Esophagus squamous epithelium (tissue), 5 donors: ENCODE measurements at regions of chr6 and their contacts with region 1.

Region 1: DNA sequence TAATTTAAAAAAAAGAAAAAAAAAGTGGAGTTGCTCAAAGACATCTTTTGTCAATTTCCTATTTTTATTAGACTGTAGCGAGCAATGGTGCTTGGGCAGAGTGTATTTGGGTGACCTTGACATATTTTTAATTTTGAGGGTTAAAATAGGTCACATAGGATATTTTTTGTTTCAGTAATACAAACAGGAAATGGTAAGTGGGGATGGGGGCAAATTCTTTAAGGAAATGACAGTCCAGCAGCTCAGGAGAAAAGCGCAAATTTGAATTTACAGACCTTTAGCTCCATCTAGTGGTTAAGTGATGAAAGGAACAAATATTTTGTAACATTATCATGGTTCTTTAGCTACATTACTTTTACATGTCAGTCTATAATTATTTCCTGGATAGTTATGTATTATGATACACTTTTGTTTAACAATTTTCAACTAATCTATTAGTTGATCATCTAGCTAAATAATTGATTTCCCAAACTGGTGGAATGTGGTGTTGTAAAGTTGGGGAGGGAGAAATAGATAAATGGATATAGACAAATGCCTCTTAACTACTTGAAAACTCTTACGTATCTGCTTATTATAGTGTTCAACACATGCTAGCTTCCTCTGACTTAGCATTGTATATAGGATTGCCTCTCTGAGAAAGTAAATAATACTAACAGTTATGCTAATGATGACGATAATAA is 10.0 kb downstream of the CITED2 start:
- DNase-seq: no peak
- H3K4me3 ChIP-seq: no peak overlapping the region
- H3K27ac ChIP-seq: no peak overlapping the region
- H3K4me1 ChIP-seq: peaks cover 0 to 13% (median 2%) of the 10 kb centered on the region in 3 donors
- H3K27me3 ChIP-seq: no peaks in the 10 kb centered on the region
- CTCF ChIP-seq: peak; percentile 67 to 88 (median 68)
- POLR2A ChIP-seq: no peak

Region 2: GRCh38 chr6:139124887-139125672 is 239.4 kb before region 1 on chr6:
- intact Hi-C with region 1: loop called (anchors 10 kb)
- DNase-seq: peak; percentile 11
- H3K4me3 ChIP-seq: no peak overlapping the region
- H3K27ac ChIP-seq: peak overlapping the region in 3 of 4 donors; percentile 21 to 70 (median 35)
- H3K4me1 ChIP-seq: peaks cover 4 to 20% (median 6%) of the 10 kb centered on the region in 3 donors
- H3K27me3 ChIP-seq: no peaks in the 10 kb centered on the region
- CTCF ChIP-seq: peak; percentile 36 to 68 (median 58)
- POLR2A ChIP-seq: no peak